Endothelial cell of umbilical vein (primary cell): ENCODE measurements at regions of chr13 and their contacts with region 1.

Region 1: GRCh38 chr13:81929988-81930387 is 1589.1 kb upstream of the SPRY2 start:
- DNase-seq: peak; percentile 43
- H3K4me3 ChIP-seq: no peak overlapping the region
- H3K27ac ChIP-seq: no peak overlapping the region
- H3K4me1 ChIP-seq: no peaks in the 10 kb centered on the region
- H3K27me3 ChIP-seq: no peaks in the 10 kb centered on the region
- CTCF ChIP-seq: peak; percentile 37 to 49
- POLR2A ChIP-seq: no peak

Region 2: GRCh38 chr13:81058916-81059290 is 871.1 kb before region 1 on chr13:
- CTCF ChIA-PET with region 1: no interaction called
- POLR2A ChIA-PET with region 1: no interaction called
- dilution Hi-C with region 1: no loop called
- intact Hi-C with region 1: loop called (anchors 5 kb)
- DNase-seq: peak; percentile 46
- H3K4me3 ChIP-seq: no peak overlapping the region
- H3K27ac ChIP-seq: peak overlapping the region; percentile 32
- H3K4me1 ChIP-seq: peaks cover 13% of the 10 kb centered on the region
- H3K27me3 ChIP-seq: no peaks in the 10 kb centered on the region
- CTCF ChIP-seq: no peak
- POLR2A ChIP-seq: no peak

Region 3: GRCh38 chr13:82076421-82076950 is 146.5 kb after region 1 on chr13:
- CTCF ChIA-PET with region 1: interaction called, 16 read pairs
- POLR2A ChIA-PET with region 1: no interaction called
- dilution Hi-C with region 1: no loop called
- intact Hi-C with region 1: loop called (anchors 1 kb)
- DNase-seq: no peak
- H3K4me3 ChIP-seq: no peak overlapping the region
- H3K27ac ChIP-seq: no peak overlapping the region
- H3K4me1 ChIP-seq: no peaks in the 10 kb centered on the region
- H3K27me3 ChIP-seq: no peaks in the 10 kb centered on the region
- CTCF ChIP-seq: no peak
- POLR2A ChIP-seq: no peak

Region 4: GRCh38 chr13:82147526-82147925 is 217.5 kb after region 1 on chr13:
- CTCF ChIA-PET with region 1: no interaction called
- POLR2A ChIA-PET with region 1: no interaction called
- dilution Hi-C with region 1: no loop called
- intact Hi-C with region 1: loop called (anchors 10 kb)
- DNase-seq: no peak
- H3K4me3 ChIP-seq: no peak overlapping the region
- H3K27ac ChIP-seq: no peak overlapping the region
- H3K4me1 ChIP-seq: no peaks in the 10 kb centered on the region
- H3K27me3 ChIP-seq: no peaks in the 10 kb centered on the region
- CTCF ChIP-seq: no peak
- POLR2A ChIP-seq: no peak

Region 5: GRCh38 chr13:82330499-82330898 is 400.5 kb after region 1 on chr13:
- CTCF ChIA-PET with region 1: interaction called, 14 read pairs
- POLR2A ChIA-PET with region 1: no interaction called
- dilution Hi-C with region 1: no loop called
- intact Hi-C with region 1: loop called (anchors 1 kb)
- DNase-seq: peak; percentile 21
- H3K4me3 ChIP-seq: no peak overlapping the region
- H3K27ac ChIP-seq: no peak overlapping the region
- H3K4me1 ChIP-seq: no peaks in the 10 kb centered on the region
- H3K27me3 ChIP-seq: no peaks in the 10 kb centered on the region
- CTCF ChIP-seq: peak; percentile 14 to 35
- POLR2A ChIP-seq: no peak